ENCODE measurements at regions of chr1 and their contacts with region 1.

Region 1: GRCh38 chr1:44652445-44653106 is 21.7 kb downstream of the TMEM53 start:
- DNase-seq: peak; percentile 72
- H3K4me3 ChIP-seq: no peak overlapping the region
- H3K27ac ChIP-seq: no peak overlapping the region
- H3K4me1 ChIP-seq: no peaks in the 10 kb centered on the region
- H3K27me3 ChIP-seq: no peaks in the 10 kb centered on the region
- CTCF ChIP-seq: peak; percentile 92 to 94
- POLR2A ChIP-seq: no peak

Region 2: DNA sequence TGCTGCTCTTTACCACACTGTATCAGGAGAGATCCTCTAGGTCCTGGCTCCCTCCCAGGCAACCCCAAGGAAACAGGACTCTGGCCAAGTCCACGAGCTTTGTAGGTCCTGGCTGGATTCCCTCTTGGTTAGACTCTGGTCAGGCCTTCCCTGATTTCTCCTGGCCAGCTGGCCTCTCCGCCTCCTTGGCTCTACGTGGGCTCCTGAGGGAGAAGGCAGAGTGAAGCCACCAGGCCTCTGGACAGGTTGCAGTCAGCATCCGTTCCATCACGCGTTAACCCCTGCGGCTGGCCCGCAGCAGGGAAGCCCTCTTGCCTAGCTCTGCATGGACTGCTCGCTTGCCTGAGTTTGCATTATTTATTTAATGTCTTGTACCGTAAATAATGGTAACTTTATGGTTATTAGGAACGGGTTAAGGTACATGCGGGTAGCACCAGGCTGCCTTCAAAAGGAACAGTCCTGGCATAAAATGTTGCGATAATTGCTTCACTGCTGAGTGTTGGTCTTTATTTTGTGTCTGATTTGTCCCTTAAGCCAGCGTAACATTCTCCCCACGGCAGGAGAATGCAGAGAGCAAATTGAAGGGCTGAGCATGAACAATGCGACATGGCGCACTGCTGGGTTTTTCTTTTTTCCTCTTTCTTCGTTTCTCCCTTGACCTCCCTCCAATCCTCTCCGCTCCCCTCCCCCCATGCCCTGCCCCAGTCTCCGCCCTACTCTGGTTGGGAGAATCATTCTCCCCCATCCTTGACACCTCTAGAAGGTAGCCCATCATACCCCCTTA is 147.2 kb before region 1 on chr1:
- CTCF ChIA-PET with region 1: no interaction called
- POLR2A ChIA-PET with region 1: no interaction called
- dilution Hi-C with region 1: no loop called
- intact Hi-C with region 1: no loop called
- DNase-seq: no peak
- H3K4me3 ChIP-seq: no peak overlapping the region
- H3K27ac ChIP-seq: no peak overlapping the region
- H3K4me1 ChIP-seq: no peaks in the 10 kb centered on the region
- H3K27me3 ChIP-seq: peaks cover 10 to 14% of the 10 kb centered on the region in 2 experiments
- CTCF ChIP-seq: no peak
- POLR2A ChIP-seq: no peak

Region 3: GRCh38 chr1:44571712-44572571 is 80.6 kb before region 1 on chr1:
- CTCF ChIA-PET with region 1: interaction called, 46 read pairs
- POLR2A ChIA-PET with region 1: no interaction called
- dilution Hi-C with region 1: no loop called
- intact Hi-C with region 1: loop called (anchors 1 kb)
- DNase-seq: peak; percentile 8
- H3K4me3 ChIP-seq: no peak overlapping the region
- H3K27ac ChIP-seq: no peak overlapping the region
- H3K4me1 ChIP-seq: no peaks in the 10 kb centered on the region
- H3K27me3 ChIP-seq: peaks cover 9 to 10% of the 10 kb centered on the region in 2 experiments
- CTCF ChIP-seq: peak; percentile 35 to 41
- POLR2A ChIP-seq: no peak

Region 4: GRCh38 chr1:44616991-44617702 is 35.4 kb before region 1 on chr1:
- CTCF ChIA-PET with region 1: interaction called, 109 read pairs
- POLR2A ChIA-PET with region 1: no interaction called
- dilution Hi-C with region 1: no loop called
- intact Hi-C with region 1: no loop called
- DNase-seq: no peak
- H3K4me3 ChIP-seq: peak overlapping the region in 1 of 3 experiments; percentile 10
- H3K27ac ChIP-seq: no peak overlapping the region
- H3K4me1 ChIP-seq: no peaks in the 10 kb centered on the region
- H3K27me3 ChIP-seq: peaks cover 36 to 47% of the 10 kb centered on the region in 2 experiments
- CTCF ChIP-seq: no peak
- POLR2A ChIP-seq: no peak

Region 5: DNA sequence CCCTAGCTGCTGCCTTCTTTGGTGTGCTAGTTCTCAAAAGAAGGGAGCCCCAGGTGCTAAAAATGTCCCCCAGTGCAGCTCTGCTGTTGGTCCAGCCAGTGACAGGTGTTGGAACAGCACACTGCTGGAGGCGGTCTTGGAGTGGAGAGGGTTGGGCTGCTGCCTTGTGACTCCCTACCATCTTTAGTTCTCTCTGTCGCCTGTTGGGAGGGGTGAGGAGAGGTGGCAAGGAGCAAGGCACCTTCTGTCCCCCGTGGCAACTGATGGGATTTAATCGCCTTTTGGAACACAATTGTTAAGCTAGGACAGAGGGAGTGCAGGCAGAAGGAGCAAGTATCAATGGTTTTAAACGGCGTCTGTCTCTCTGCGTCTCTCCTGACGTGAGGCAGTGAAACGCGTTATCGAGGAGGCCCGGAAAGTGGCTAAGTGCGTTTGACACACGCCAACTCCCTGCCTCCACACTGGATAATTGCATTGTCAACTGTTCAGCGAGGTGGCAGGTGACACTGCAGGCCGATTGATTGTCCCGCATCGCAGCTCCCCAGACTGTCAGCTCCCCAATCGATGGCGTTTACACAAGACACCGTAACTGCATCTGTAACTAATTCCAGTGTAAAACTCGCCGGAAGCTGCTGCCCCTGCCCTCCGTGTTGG is 12.2 kb before region 1 on chr1:
- CTCF ChIA-PET with region 1: interaction called, 48 read pairs
- POLR2A ChIA-PET with region 1: interaction called, 4 read pairs
- dilution Hi-C with region 1: no loop called
- intact Hi-C with region 1: no loop called
- DNase-seq: no peak
- H3K4me3 ChIP-seq: no peak overlapping the region
- H3K27ac ChIP-seq: no peak overlapping the region
- H3K4me1 ChIP-seq: no peaks in the 10 kb centered on the region
- H3K27me3 ChIP-seq: no peaks in the 10 kb centered on the region
- CTCF ChIP-seq: no peak
- POLR2A ChIP-seq: no peak

Region 6: DNA sequence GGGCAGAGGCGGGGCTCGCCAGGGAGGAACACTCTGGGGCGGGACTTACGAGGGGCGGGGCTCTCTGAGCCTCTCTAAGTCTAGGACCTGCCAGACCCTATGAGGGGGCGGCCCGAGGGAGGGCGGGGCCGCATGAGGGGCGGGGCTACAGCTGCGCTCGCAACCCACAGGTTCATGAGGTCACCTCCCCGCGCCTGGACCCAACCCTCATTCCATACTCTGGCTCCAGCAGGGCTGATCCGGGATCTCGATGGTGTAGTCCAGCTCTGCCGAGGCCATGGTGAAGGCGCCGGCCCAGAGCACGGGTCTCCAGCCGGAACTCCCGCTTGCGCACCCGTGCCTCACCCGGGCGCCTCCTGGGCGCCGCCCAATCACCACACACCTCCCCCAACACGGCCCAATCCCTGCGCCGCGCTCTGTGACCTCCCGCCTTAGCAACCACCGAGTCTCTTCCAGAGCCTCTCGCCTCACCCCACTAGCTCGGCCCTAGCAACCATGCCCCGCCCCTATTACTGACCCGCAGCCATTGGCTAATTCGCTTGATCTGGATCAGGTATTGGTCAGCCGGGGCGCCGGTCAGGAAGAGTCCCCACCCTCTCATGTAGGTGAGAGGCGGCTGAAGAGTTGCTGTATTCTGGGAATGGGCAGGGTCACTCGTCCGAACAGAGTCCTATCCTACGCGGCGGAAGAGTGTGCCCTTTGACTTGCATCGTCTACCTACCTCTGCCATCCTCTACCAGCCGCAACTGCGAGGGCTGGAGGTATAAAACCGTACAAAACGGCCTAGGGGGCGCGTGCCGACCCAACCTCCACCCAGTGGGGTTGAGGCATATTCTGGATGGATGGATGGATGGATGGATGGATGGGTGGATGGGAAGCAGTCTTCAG is 21.8 kb after region 1 on chr1 and contains the starts of genes ARMH1 and TMEM53:
- CTCF ChIA-PET with region 1: interaction called, 27 read pairs
- POLR2A ChIA-PET with region 1: no interaction called
- dilution Hi-C with region 1: no loop called
- intact Hi-C with region 1: loop called (anchors 1 kb)
- DNase-seq: peak; percentile 99
- H3K4me3 ChIP-seq: peak within 1 kb of the TSS; percentile 53 to 69 (median 65)
- H3K27ac ChIP-seq: peak within 1 kb of the TSS; percentile 71
- H3K4me1 ChIP-seq: peaks cover 41% of the 10 kb centered on the region
- H3K27me3 ChIP-seq: no peaks in the 10 kb centered on the region
- CTCF ChIP-seq: peak in 1 of 2 donors; percentile 14
- POLR2A ChIP-seq: peak; percentile 83
- total RNA-seq, gene ARMH1: not detected in 2 replicates
- total RNA-seq, gene TMEM53: 5.3 and 5.7 TPM in 2 replicates